MCF 10A (cell line): ENCODE measurements at regions of chr10 and their contacts with region 1.

Region 1: DNA sequence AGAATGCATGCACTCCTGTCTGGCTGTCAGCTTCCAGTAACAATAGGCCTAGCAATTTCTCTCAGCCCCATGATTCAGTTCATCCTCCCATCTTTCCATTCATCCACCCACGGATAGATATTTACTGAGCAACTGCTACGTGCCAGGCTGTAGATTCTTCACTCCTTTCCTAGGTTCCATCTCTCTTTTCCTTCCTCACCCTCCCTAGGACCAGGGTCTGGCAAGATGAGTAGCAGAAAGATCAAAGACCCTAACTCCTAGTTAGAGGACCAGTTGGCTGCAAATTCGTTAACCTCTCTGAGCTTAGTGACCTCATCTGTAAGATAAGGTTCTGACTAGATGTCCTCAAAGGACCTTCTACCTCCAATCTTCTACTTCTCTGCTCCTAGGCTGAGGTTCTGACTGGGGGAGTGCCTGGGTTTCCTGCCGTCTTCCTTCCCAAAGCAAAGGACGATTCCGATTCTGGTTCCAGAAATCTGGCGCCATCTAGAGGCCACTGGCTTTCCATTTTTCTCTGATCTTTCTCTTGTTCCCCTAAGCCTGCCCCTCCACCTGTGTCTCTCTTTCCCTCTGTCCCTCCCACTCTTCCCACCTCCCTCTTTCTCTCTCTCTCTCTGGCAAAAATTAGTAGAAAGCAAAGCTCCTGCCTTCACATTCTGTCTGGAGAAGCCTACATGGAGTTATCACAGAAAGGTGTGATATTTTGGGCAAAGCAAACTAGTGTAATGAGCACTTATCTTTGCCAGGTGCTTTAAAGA is 26.2 kb downstream of the TBATA start:
- DNase-seq: peak; percentile 82
- H3K4me3 Mint-ChIP-seq: no peak overlapping the region
- H3K27ac Mint-ChIP-seq: no peak overlapping the region
- H3K4me1 Mint-ChIP-seq: peaks cover 24% of the 10 kb centered on the region
- H3K27me3 Mint-ChIP-seq: no peaks in the 10 kb centered on the region
- CTCF ChIP-seq: peak; percentile 66

Region 2: DNA sequence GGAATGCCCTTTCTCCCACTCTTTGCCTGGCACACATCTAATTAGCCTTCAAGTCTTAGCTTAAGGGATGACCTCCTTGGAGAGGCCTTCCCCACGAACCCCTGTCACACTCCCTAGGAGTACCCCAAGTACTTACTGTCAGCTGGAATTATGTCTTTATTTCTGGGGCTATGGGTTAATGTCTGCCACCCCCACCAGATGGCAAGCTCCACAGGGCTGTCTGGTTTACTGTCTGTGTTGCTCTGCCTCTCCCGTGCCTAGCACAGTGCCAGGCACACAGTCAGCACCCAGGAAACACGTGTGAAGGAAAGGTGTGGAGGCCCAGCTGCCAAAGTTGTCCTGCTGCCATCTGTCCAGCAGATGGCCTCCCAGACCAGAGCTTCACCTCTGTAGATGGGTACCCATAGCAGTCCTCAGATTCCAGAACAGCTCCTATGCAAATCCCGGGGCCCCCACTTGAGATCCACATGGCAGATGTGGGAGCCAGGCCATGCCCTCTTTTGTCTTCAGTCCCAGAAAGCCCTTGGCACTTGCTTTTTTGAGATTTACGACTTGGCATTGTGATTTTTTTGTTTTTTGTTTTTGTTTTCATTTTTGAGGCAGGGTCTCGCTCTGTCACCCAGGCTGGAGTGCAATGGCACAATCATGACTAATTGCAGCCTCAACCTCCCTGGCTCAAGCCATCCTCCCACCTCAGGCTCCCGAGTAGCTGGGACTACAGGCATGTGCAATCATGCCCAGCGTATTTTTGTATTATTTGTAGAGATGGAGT is 297.5 kb before region 1 on chr10:
- CTCF ChIA-PET with region 1: interaction called, 10 read pairs
- POLR2A ChIA-PET with region 1: no interaction called
- intact Hi-C with region 1: loop called (anchors 2 kb)
- DNase-seq: peak; percentile 74
- H3K4me3 Mint-ChIP-seq: no peak overlapping the region
- H3K27ac Mint-ChIP-seq: no peak overlapping the region
- H3K4me1 Mint-ChIP-seq: peaks cover 23% of the 10 kb centered on the region
- H3K27me3 Mint-ChIP-seq: peaks cover 17% of the 10 kb centered on the region
- CTCF ChIP-seq: peak; percentile 85

Region 3: DNA sequence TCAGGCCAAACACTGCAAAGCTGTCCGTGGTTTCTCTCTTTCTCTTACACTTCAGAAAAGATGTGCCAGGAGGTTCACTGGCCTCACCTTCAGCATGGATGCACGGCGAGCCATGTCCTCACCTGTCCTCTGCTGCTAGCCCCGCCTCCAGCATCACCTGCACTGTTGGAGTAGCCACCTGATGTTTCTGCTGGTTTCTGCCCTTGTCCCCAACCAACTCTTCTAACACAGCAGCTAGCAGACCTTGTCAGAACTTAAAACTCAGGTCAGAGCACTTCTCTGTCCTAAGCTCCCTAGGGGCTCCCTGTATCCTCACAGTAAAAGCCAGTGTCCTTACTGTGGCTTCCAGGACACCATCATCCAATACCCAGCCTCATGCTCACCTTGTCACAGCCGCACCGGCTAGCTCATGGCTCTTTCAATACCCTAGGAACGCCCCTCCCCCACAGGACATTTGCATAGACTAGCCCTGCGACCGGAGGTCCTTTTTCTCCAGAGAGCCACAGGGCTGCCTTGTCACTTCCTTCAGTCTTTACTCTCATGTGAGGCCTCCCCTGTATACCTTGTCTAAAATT is 265.2 kb before region 1 on chr10:
- CTCF ChIA-PET with region 1: no interaction called
- POLR2A ChIA-PET with region 1: no interaction called
- intact Hi-C with region 1: no loop called
- DNase-seq: no peak
- H3K4me3 Mint-ChIP-seq: no peak overlapping the region
- H3K27ac Mint-ChIP-seq: no peak overlapping the region
- H3K4me1 Mint-ChIP-seq: no peaks in the 10 kb centered on the region
- H3K27me3 Mint-ChIP-seq: peaks cover 30% of the 10 kb centered on the region
- CTCF ChIP-seq: no peak

Region 4: DNA sequence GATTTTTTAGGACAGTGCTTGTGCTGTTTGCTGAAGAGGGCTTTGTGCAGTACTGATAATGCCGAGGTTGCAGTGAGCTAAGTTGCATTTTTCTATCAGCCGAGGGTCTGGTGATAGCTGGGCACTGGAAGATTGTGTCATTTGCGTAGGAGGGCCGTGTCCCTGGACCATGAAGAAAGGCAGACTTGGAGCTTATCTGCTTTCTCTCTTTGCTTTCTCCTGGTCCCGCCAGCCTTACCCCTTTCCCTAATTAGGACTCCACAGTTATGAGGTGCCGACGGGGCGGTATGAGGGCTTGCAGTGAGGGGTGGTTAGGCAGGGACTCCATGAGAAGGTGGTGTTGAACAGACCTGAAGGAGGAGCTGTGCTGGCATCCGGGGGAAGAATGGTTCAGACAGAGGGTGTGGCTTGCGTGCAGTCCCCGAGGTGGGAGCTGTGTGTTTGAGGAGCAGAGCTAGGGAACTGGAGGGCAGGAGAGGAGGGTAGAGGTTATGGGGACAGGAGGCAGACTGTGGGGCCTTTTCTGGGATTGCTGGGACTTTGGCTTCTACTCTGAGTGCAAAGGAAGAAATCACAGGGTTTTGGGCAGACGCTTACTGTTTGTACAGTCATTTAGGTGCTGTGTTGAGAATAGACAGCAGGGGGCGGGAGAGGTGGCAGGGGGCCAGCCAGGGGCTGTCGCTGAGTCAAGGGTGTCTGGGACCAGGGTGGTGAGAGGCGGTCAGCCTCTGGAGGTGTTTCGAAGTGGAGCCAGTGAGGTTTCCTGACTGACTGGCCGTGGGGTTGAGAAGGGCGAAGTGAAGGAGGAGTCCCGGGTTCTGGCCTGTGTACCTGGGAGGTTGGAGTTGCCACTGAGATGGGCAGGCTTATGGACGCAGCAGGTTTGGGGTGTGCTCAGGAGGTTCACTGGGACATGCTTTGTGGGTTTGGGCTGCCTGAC is 199.8 kb before region 1 on chr10:
- CTCF ChIA-PET with region 1: interaction called, 47 read pairs
- POLR2A ChIA-PET with region 1: interaction called, 3 read pairs
- intact Hi-C with region 1: loop called (anchors 1 kb)
- DNase-seq: peak; percentile 66
- H3K4me3 Mint-ChIP-seq: no peak overlapping the region
- H3K27ac Mint-ChIP-seq: no peak overlapping the region
- H3K4me1 Mint-ChIP-seq: peaks cover 9% of the 10 kb centered on the region
- H3K27me3 Mint-ChIP-seq: peaks cover 15% of the 10 kb centered on the region
- CTCF ChIP-seq: peak; percentile 69

Region 5: DNA sequence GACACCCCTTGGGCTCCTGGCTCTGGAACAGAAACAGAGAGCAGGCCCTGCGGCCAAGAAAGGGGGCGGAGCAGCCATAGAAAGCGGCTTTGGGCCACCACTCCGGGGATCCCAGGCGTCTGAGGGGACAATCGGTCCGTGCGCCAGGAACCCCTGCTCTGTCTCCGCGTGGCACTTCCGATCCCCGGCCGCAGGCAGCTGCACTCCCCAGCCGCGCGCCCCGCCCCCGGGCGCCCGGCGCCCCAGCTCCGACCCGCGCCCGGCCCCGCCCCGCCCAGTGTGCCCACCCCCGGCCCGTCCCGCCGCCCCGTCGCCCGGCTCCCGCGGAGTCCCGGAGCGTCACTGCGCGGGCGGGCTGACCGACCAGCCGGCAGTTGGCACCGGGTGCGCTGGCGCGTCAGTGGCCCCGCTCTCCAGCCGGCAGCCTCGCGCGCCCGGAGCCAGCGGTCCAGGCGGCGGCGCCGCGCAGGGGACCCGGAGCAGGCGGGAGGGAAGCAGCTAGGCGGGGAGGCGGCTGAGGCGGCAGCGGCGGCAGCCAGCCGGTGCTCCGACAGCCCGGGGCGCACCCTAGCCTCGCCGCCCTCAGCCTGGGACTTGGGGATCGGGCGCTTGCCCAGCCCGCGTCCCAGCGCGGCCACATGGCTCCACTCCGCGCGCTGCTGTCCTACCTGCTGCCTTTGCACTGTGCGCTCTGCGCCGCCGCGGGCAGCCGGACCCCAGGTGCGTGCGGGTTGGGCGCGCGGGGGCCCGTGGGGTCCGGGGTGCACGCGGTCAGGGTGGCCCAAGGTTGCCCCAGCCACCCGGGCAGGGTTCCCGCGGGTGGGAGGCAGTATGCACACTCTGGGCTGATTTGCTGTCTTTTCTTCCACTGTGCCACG is 86.5 kb before region 1 on chr10 and contains the start of gene ADAMTS14:
- CTCF ChIA-PET with region 1: no interaction called
- POLR2A ChIA-PET with region 1: no interaction called
- intact Hi-C with region 1: loop called (anchors 5 kb)
- DNase-seq: no peak
- H3K4me3 Mint-ChIP-seq: peak within 1 kb of the TSS; percentile 61
- H3K27ac Mint-ChIP-seq: no peak within 1 kb of the TSS
- H3K4me1 Mint-ChIP-seq: peaks cover 30% of the 10 kb centered on the region
- H3K27me3 Mint-ChIP-seq: peaks cover 36% of the 10 kb centered on the region
- CTCF ChIP-seq: no peak
- total RNA-seq, gene ADAMTS14: 0.25 TPM in 1 of 2 replicates, not detected in the other

Region 6: DNA sequence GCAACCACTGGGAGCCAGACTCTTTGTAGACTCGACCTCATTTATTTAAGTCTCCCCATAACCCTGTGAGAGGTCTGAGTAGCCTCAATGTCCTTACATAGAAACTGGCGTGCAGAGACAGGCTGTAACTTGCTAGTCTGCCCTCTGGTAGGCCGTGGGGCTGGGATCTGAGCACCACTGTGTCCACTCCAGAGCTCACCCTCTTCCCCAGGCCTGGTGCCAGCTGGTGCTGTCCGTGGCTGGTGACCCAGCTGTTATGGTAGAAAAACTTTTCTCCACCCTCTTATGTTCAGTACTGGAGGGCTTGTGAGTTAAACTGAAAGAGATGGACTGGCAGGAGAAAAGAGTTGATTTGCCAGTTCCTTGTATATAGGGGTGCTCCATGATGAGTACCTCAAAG is 44.7 kb before region 1 on chr10:
- CTCF ChIA-PET with region 1: no interaction called
- POLR2A ChIA-PET with region 1: no interaction called
- intact Hi-C with region 1: no loop called
- DNase-seq: no peak
- H3K4me3 Mint-ChIP-seq: no peak overlapping the region
- H3K27ac Mint-ChIP-seq: no peak overlapping the region
- H3K4me1 Mint-ChIP-seq: peaks cover 6% of the 10 kb centered on the region
- H3K27me3 Mint-ChIP-seq: no peaks in the 10 kb centered on the region
- CTCF ChIP-seq: no peak

Region 7: GRCh38 chr10:70740406-70741288 is 18.3 kb before region 1 on chr10:
- CTCF ChIA-PET with region 1: interaction called, 10 read pairs
- POLR2A ChIA-PET with region 1: interaction called, 3 read pairs
- intact Hi-C with region 1: no loop called
- DNase-seq: no peak
- H3K4me3 Mint-ChIP-seq: no peak overlapping the region
- H3K27ac Mint-ChIP-seq: no peak overlapping the region
- H3K4me1 Mint-ChIP-seq: no peaks in the 10 kb centered on the region
- H3K27me3 Mint-ChIP-seq: peaks cover 10% of the 10 kb centered on the region
- CTCF ChIP-seq: no peak